HCT116 (cell line): ENCODE measurements at regions of chr17 and their contacts with region 1.

Region 1: GRCh38 chr17:74859459-74860228 is at the start of gene GRIN2C:
- DNase-seq: no peak
- ATAC-seq: peak; percentile 47
- H3K4me3 ChIP-seq: no peak within 1 kb of the TSS; a peak in 1 of 4 replicates
- H3K27ac ChIP-seq: no peak within 1 kb of the TSS
- H3K4me1 ChIP-seq: peaks cover 0 to 13% of the 10 kb centered on the region in 2 experiments; a peak in 1 of 4 replicates
- H3K27me3 ChIP-seq: no peaks in the 10 kb centered on the region; the same call in 1 of the 2 replicates
- CTCF ChIP-seq: peak in 1 of 3 experiments; percentile 35; a peak in 2 of 6 replicates
- POLR2A ChIP-seq: no peak
- RAD21 ChIP-seq: no peak
- total RNA-seq, gene GRIN2C: 2.2 TPM

Region 2: GRCh38 chr17:74822939-74823367 is 36.7 kb before region 1 on chr17:
- CTCF ChIA-PET with region 1: no interaction called
- POLR2A ChIA-PET with region 1: no interaction called
- RAD21 ChIA-PET with region 1: no interaction called
- intact Hi-C with region 1: no loop called
- DNase-seq: no peak
- ATAC-seq: no peak
- H3K4me3 ChIP-seq: no peak overlapping the region
- H3K27ac ChIP-seq: no peak overlapping the region
- H3K4me1 ChIP-seq: no peaks in the 10 kb centered on the region
- H3K27me3 ChIP-seq: no peaks in the 10 kb centered on the region
- CTCF ChIP-seq: no peak
- POLR2A ChIP-seq: no peak
- RAD21 ChIP-seq: no peak

Region 3: GRCh38 chr17:74842599-74843351 is 16.9 kb before region 1 on chr17:
- CTCF ChIA-PET with region 1: interaction called, 33 read pairs
- POLR2A ChIA-PET with region 1: interaction called, 3 read pairs
- RAD21 ChIA-PET with region 1: no interaction called
- intact Hi-C with region 1: no loop called
- DNase-seq: peak; percentile 56
- ATAC-seq: peak; percentile 90
- H3K4me3 ChIP-seq: peak overlapping the region; percentile 40 to 59
- H3K27ac ChIP-seq: peak overlapping the region; percentile 80; the same call in 1 of the 2 replicates
- H3K4me1 ChIP-seq: peaks cover 7 to 25% of the 10 kb centered on the region in 2 experiments
- H3K27me3 ChIP-seq: no peaks in the 10 kb centered on the region
- CTCF ChIP-seq: peak in 2 of 3 experiments; percentile 58 to 65; a peak in 5 of 6 replicates
- POLR2A ChIP-seq: peak; percentile 36
- RAD21 ChIP-seq: no peak; the same call in none of the 2 replicates